ENCODE measurements at regions of chr18 and their contacts with region 1.

Region 1: DNA sequence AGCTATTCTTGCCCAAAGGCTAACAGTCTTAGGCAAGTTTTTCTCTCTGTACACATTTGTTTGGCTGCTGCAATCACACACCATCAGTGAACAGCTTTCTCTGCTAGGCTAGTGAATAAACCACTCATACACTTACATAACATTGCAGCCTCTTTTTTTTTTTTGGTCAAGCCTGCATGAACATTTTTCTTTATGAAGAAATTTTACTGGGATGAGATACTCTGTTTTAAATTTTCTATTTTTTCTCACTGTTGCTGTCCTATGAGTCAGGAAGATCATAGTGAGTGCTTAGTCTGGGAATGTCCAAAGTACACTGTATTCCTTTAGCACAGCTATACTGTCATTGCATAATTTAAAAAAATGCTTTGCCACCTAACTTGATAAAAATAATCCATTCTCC is 58.5 kb downstream of the ROCK1 start:
- DNase-seq: no peak
- ATAC-seq: peak; percentile 62 to 63
- H3K4me3 ChIP-seq: no peak overlapping the region
- H3K27ac ChIP-seq: peak overlapping the region; percentile 37
- H3K4me1 ChIP-seq: peaks cover 9% of the 10 kb centered on the region
- H3K27me3 ChIP-seq: no peaks in the 10 kb centered on the region

Region 2: GRCh38 chr18:21111341-21112139 is 58.4 kb after region 1 on chr18 and contains the start of gene ROCK1:
- intact Hi-C with region 1: loop called in 1 of 4 experiments (anchors 10 kb)
- DNase-seq: peak; percentile 100
- ATAC-seq: peak; percentile 98
- H3K4me3 ChIP-seq: peak within 1 kb of the TSS; percentile 92
- H3K27ac ChIP-seq: peak within 1 kb of the TSS; percentile 91
- H3K4me1 ChIP-seq: no peaks in the 10 kb centered on the region
- H3K27me3 ChIP-seq: no peaks in the 10 kb centered on the region
- total RNA-seq, gene ROCK1: 30.3 to 41.6 (median 36.7) TPM

Region 3: GRCh38 chr18:21612125-21612991 is 559.2 kb after region 1 on chr18 and contains the start of gene SNRPD1:
- intact Hi-C with region 1: no loop called
- DNase-seq: peak; percentile 90 to 96 (median 95)
- ATAC-seq: peak; percentile 99
- H3K4me3 ChIP-seq: peak within 1 kb of the TSS; percentile 62
- H3K27ac ChIP-seq: peak within 1 kb of the TSS; percentile 6
- H3K4me1 ChIP-seq: no peaks in the 10 kb centered on the region
- H3K27me3 ChIP-seq: no peaks in the 10 kb centered on the region
- total RNA-seq, gene SNRPD1: 17.1 to 29.9 (median 25.4) TPM

Region 4: GRCh38 chr18:21672521-21673267 is 619.6 kb after region 1 on chr18:
- intact Hi-C with region 1: loop called in 1 of 4 experiments (anchors 10 kb)
- DNase-seq: peak in 1 of 3 donors; percentile 62
- ATAC-seq: peak; percentile 64 to 77
- H3K4me3 ChIP-seq: no peak overlapping the region
- H3K27ac ChIP-seq: peak overlapping the region; percentile 45
- H3K4me1 ChIP-seq: no peaks in the 10 kb centered on the region
- H3K27me3 ChIP-seq: no peaks in the 10 kb centered on the region